GM13977 (cell line): ENCODE measurements at regions of chr5 and their contacts with region 1.

Region 1: DNA sequence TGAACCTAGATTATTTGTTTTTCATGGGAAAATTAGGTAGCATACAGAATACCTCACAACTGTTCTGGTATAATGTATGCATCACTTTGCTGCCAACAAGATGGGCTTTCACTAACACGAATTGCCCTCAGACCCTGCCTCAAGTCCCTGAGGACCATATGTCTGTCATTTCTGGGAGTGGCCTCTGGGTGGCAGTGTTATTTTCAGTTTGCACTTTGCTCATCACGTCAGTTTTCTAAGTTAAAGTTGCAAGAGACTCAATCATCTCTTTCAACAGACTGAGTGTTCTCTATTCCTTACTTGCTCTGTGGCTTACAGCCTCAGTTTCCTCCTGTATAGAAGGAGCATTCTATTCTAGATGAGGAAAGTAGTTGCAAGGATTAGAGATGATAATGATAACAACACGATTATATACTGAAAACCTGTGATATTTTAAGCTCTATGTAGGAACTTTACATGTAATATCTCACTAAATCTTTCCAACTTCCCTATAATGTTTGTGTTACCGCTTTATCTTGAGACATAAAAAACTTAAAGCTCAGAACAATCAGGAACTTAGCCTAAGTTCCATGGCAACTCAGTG is 55.7 kb downstream of the TSSK1B start:
- DNase-seq: peak; percentile 63
- CTCF ChIP-seq: peak; percentile 80

Region 2: GRCh38 chr5:113606298-113607134 is 227.5 kb after region 1 on chr5:
- in situ Hi-C with region 1: loop called (anchors 25 kb)
- DNase-seq: peak; percentile 26
- CTCF ChIP-seq: peak; percentile 75

Region 3: GRCh38 chr5:113917997-113918396 is 538.9 kb after region 1 on chr5:
- in situ Hi-C with region 1: no loop called
- DNase-seq: no peak
- CTCF ChIP-seq: no peak